Activated CD8-positive, alpha-beta T cell treated with anti-CD3 and anti-CD28 coated beads for 36 hours (primary cell): ENCODE measurements at regions of chr5 and their contacts with region 1.

Region 1: DNA sequence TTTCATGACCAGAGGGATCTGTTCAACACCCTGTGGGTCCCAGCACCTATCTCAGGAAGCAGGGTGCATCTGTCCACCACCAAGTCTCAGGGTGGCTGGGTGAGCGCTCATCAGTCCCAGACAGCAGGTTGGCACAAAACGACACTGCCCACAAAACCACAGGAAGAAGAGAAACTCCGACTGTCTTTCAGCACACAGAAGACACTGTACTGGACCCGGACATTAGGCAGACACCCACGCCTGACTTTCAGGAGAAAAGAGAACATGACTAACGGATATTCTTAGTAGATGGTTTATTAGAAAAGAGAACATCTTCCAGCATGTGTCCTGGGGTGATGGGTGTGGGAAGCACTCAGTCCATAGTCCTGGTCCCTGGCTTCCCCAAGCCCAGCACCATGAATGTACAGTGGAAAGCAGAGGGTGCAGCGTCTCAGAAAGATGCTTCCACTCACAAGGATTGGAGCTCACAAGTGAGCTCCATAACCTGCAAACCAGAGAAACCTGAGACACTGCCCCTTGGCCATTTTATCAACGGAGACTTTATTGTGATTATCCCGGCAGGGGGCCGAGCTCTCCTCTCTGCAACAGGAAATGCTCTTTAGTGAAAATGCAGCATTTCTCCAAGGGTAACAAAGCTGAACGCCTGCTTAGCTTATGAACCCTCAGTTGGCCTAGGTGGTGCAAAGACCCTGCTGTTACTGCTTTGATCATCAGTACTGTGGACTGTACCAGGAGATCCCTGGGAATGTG is 35.8 kb upstream of the LCP2 start:
- DNase-seq: peak; percentile 90
- ATAC-seq: peak; percentile 35
- H3K4me3 Mint-ChIP-seq: no peak overlapping the region
- H3K27ac Mint-ChIP-seq: no peak overlapping the region
- H3K4me1 Mint-ChIP-seq: peaks cover 30% of the 10 kb centered on the region
- H3K27me3 Mint-ChIP-seq: no peaks in the 10 kb centered on the region
- CTCF ChIP-seq: no peak

Region 2: DNA sequence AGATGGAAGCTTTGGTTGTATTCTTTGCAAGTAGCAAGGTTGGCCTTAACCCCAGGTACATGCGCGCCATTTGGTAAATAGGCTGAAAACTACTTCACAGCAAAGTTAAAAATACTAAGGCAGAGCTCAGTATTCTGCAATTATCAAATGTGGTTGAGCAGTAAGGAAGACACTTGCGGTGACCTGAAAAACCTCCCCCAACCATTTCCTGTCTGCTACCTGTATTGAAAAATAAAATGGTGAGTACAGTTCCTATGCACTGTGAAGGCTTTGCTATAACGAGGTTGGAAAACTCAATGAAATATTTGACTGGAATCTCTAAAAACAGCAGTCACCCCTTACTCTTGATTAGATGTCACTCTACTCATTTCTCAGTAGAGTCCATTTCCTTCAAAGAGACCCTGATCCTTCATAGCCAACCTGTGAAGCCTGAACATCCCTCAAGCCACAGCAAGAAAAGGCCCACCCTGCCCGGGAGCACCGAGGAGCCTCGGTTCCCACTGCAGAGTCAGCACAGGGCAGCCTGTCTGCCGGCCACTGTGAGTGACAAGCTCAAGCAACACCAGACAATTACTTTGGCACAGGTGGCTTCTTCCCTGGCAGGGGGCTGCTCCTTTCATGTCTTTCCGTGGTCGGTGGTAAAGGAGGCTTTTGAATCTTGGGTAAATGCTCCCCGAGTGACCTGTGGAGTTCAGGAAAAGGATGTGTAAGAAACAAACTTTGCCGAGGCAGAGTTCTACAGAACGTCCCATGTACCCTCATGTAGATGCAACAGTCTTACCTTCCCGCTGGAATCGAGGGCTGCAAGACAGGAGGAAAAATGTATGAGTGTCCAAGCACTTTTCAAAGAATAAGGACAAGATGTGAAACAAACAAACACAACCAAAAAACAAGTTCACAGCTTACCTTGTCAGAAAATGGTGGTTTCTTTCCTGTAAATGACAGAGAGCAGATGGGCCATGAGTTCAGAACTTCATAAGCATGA is 71.0 kb before region 1 on chr5:
- CTCF ChIA-PET with region 1: interaction called, 132 read pairs
- POLR2A ChIA-PET with region 1: interaction called, 82 read pairs
- intact Hi-C with region 1: no loop called
- DNase-seq: peak; percentile 60
- ATAC-seq: peak; percentile 25
- H3K4me3 Mint-ChIP-seq: peak overlapping the region; percentile 47
- H3K27ac Mint-ChIP-seq: peak overlapping the region; percentile 96
- H3K4me1 Mint-ChIP-seq: peaks cover 91% of the 10 kb centered on the region
- H3K27me3 Mint-ChIP-seq: no peaks in the 10 kb centered on the region
- CTCF ChIP-seq: no peak

Region 3: GRCh38 chr5:170287532-170287931 is 45.8 kb before region 1 on chr5:
- CTCF ChIA-PET with region 1: interaction called, 204 read pairs
- POLR2A ChIA-PET with region 1: interaction called, 186 read pairs
- intact Hi-C with region 1: no loop called
- DNase-seq: peak; percentile 50
- ATAC-seq: peak; percentile 23
- H3K4me3 Mint-ChIP-seq: peak overlapping the region; percentile 47
- H3K27ac Mint-ChIP-seq: peak overlapping the region; percentile 96
- H3K4me1 Mint-ChIP-seq: peaks cover 100% of the 10 kb centered on the region
- H3K27me3 Mint-ChIP-seq: no peaks in the 10 kb centered on the region
- CTCF ChIP-seq: no peak

Region 4: DNA sequence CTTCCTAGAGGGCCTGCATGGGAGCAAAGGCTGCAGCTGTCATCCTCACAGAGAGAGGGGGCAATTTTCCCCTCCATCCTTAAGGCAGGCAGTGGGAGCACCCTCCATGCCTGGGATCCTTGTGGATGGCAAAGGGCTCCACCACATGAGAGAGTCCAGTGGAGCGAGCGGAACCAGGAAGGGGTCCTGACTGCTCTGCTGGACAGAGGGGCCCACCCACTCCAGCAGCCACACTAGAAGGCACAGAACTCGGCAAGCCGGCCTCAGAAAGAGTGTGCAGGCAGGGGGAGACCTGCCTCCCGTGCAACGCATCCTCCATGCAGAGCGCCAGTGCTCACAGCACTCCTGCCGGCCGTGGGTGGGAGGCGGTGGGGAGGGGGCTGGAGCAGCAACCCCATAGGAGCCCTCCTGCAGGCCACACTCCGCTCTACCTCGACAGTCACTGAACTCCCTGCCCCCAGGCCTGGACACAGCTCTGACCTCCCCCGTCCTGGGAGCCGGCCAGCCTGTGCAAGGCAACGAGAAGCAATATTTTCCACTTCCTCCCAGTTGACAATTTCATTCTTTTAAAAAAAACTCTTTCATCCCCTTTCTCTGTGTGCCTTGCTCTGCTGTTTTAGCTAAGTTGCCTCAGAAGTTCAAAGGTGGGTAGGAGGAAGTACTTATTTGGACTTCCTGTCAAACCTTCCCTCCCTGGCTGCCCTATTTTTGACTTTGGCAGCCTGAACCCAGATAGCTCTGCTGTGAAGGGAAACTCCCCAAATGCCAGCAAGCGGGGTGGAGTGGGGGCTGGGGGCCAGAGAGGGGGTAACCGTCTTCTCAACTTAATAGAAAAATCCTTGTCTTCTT is 30.5 kb before region 1 on chr5:
- CTCF ChIA-PET with region 1: interaction called, 204 read pairs
- POLR2A ChIA-PET with region 1: interaction called, 186 read pairs
- intact Hi-C with region 1: loop called (anchors 2 kb)
- DNase-seq: peak; percentile 71
- ATAC-seq: peak; percentile 87
- H3K4me3 Mint-ChIP-seq: peak overlapping the region; percentile 80
- H3K27ac Mint-ChIP-seq: peak overlapping the region; percentile 98
- H3K4me1 Mint-ChIP-seq: peaks cover 86% of the 10 kb centered on the region
- H3K27me3 Mint-ChIP-seq: no peaks in the 10 kb centered on the region
- CTCF ChIP-seq: peak; percentile 21

Region 5: DNA sequence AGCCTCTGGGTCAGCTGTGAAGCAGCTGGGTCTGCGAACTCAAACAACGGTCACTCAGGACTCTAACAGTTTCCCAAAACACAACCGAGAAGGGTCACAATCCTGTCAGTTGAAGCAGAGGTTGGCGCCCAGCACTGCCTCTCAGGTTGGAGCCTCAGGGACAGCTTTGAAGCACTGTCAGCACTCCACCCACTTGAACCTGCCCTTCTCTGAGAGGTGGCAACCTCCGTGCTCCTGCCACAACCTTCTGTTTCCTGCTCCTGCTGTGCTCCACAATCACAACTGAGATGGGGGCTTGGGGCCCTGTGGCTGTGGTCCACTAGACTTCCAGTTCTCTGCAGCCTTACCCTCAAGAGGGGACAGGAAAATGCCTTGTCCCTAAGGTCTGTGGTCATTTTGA is 14.0 kb before region 1 on chr5:
- CTCF ChIA-PET with region 1: interaction called, 14 read pairs
- POLR2A ChIA-PET with region 1: interaction called, 86 read pairs
- intact Hi-C with region 1: no loop called
- DNase-seq: peak; percentile 44
- ATAC-seq: peak; percentile 77
- H3K4me3 Mint-ChIP-seq: no peak overlapping the region
- H3K27ac Mint-ChIP-seq: peak overlapping the region; percentile 68
- H3K4me1 Mint-ChIP-seq: peaks cover 29% of the 10 kb centered on the region
- H3K27me3 Mint-ChIP-seq: no peaks in the 10 kb centered on the region
- CTCF ChIP-seq: no peak

Region 6: DNA sequence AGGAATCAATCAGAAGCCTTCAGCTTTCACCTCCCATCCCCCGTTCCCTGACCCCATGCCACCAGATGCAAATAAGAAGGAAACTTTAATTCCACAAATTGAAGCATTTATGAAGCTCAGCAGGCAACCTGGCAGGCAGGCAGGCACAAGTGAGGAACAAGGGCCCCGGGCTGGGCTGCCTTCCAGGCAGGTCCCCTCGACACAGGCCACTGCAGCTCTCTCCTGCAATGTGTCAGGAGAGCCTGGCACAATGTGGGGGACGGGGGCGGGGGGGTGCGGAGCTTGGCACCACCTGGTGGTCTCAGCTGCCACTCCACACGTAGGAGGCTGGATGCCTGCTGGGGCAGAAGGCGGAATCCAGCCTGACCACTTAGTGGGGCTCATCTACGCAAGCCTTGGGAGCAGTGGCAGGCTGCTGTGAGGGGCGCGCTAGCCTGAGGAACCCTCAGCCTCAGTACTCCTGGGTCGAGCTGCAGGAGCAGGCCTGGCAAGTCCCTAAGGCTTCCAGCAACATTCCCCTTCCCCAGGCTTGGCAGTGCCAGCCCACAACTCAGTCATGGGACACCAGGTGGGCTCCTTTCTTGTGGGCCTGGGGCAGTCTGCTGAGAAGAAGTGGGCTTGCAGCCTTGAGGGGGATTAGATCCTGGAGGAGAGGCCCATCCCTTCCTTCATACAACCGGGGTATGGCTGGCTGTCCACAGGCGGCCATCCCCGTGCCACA is 106.0 kb after region 1 on chr5:
- CTCF ChIA-PET with region 1: no interaction called
- POLR2A ChIA-PET with region 1: no interaction called
- intact Hi-C with region 1: no loop called
- DNase-seq: no peak
- ATAC-seq: no peak
- H3K4me3 Mint-ChIP-seq: no peak overlapping the region
- H3K27ac Mint-ChIP-seq: no peak overlapping the region
- H3K4me1 Mint-ChIP-seq: no peaks in the 10 kb centered on the region
- H3K27me3 Mint-ChIP-seq: no peaks in the 10 kb centered on the region
- CTCF ChIP-seq: no peak

Region 7: GRCh38 chr5:170782438-170782837 is 449.1 kb after region 1 on chr5:
- CTCF ChIA-PET with region 1: no interaction called
- POLR2A ChIA-PET with region 1: no interaction called
- intact Hi-C with region 1: no loop called
- DNase-seq: no peak
- ATAC-seq: no peak
- H3K4me3 Mint-ChIP-seq: no peak overlapping the region
- H3K27ac Mint-ChIP-seq: no peak overlapping the region
- H3K4me1 Mint-ChIP-seq: no peaks in the 10 kb centered on the region
- H3K27me3 Mint-ChIP-seq: no peaks in the 10 kb centered on the region
- CTCF ChIP-seq: no peak